ENCODE measurements at regions of chr5 and their contacts with region 1.

Region 1: DNA sequence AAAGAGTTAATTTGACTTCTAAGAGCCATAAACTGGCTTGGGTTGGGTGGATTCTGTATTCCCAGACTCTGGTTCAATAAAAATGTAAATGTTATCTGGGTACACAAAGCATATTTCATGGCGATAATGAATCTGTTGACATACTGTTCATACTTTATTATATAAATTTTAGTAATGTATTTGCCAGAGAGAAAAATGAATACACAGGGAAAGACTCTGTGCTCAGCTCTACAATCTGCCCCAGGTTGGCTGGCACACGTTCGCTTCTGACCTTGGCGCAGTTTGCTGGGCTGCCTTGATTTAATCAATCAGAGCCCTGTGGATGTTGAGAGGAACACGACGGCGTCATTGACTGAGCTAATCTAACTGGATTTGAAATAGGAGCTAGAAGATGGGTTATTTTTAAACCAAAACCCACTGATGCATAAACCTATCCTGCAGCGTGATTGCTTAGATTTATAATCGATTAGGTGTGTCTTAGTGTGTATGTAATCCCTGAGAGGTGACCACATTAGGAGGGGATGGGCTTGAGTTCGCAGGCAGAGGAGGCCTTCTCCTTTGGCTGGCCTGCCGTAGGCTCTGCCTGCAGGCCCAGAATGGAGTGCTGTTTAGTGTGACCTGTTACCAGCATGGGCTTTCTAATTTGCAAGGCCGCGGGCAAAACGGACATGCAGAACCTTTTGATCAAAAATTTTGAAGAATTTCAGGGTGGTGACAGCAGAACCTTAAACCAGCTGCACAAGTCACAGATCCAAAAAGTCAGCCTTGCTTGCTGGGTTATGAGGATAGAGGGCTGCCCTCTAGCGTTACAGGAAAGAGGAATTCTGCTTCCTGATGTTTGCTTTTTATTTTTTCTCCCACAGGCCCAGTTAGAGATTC is 3.9 kb upstream of the ADCY2 start:
- DNase-seq: peak in 1 of 10 donors; percentile 40
- H3K4me3 ChIP-seq: no peak overlapping the region
- H3K27ac ChIP-seq: peak overlapping the region in 31 of 59 donors; percentile 3 to 90 (median 60)
- H3K27me3 ChIP-seq: peaks cover 0 to 13% (median 0%) of the 10 kb centered on the region in 45 donors
- CTCF ChIP-seq: peak; percentile 33 to 77 (median 64)

Region 2: GRCh38 chr5:6820851-6821479 is 571.1 kb before region 1 on chr5:
- intact Hi-C with region 1: loop called (anchors 2 to 5 kb)
- DNase-seq: peak in 2 of 10 donors; percentile 39 to 54
- H3K4me3 ChIP-seq: no peak overlapping the region
- H3K27ac ChIP-seq: peak overlapping the region in 1 of 59 donors; percentile 62
- H3K27me3 ChIP-seq: peaks cover 0 to 8% (median 0%) of the 10 kb centered on the region in 45 donors
- CTCF ChIP-seq: peak in 55 of 56 donors; percentile 18 to 70 (median 57)

Region 3: DNA sequence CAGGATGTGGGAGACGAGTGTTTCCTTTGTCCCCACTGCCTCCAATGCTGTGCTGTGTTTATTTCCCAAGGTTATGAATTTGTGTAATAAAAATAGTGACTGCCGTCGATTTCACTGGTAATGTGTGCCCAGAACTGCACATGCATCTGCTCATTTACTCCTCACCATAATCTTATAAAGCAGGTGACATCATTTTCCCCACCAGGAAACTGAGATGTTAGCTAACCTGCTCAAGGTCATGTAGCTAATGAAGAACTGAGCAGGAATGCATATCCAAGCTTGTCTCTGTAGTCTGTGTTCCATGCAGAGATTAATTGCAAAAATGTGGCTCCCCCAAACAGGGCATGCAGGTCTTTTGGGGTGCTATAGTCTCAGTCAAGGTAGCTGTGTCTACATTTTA is 454.4 kb before region 1 on chr5:
- intact Hi-C with region 1: loop called in 1 of 2 experiments (anchors 5 kb)
- DNase-seq: no peak
- H3K4me3 ChIP-seq: no peak overlapping the region
- H3K27ac ChIP-seq: peak overlapping the region in 1 of 59 donors; percentile 10
- H3K27me3 ChIP-seq: peaks cover 0 to 3% (median 0%) of the 10 kb centered on the region in 45 donors
- CTCF ChIP-seq: no peak

Region 4: GRCh38 chr5:7745882-7746610 is 354.0 kb after region 1 on chr5:
- intact Hi-C with region 1: loop called (anchors 5 kb)
- DNase-seq: peak in 9 of 10 donors; percentile 51 to 89 (median 69)
- H3K4me3 ChIP-seq: no peak overlapping the region
- H3K27ac ChIP-seq: peak overlapping the region in 26 of 59 donors; percentile 6 to 78 (median 39)
- H3K27me3 ChIP-seq: no peaks in the 10 kb centered on the region
- CTCF ChIP-seq: peak; percentile 77 to 97 (median 86)

Region 5: GRCh38 chr5:7856855-7857254 is 464.8 kb after region 1 on chr5:
- intact Hi-C with region 1: loop called in 1 of 2 experiments (anchors 10 kb)
- DNase-seq: peak in 8 of 10 donors; percentile 19 to 71 (median 51)
- H3K4me3 ChIP-seq: no peak overlapping the region
- H3K27ac ChIP-seq: peak overlapping the region in 2 of 59 donors; percentile 18 to 21
- H3K27me3 ChIP-seq: no peaks in the 10 kb centered on the region
- CTCF ChIP-seq: peak; percentile 42 to 92 (median 83)